Activated CD4-positive, alpha-beta T cell treated with anti-CD3 and anti-CD28 coated beads, Interleukin-2, amount 10 ng/mL, durations not matched to agents 24 days and 14 days (primary cell): ENCODE measurements at regions of chr1 and their contacts with region 1.

Region 1: DNA sequence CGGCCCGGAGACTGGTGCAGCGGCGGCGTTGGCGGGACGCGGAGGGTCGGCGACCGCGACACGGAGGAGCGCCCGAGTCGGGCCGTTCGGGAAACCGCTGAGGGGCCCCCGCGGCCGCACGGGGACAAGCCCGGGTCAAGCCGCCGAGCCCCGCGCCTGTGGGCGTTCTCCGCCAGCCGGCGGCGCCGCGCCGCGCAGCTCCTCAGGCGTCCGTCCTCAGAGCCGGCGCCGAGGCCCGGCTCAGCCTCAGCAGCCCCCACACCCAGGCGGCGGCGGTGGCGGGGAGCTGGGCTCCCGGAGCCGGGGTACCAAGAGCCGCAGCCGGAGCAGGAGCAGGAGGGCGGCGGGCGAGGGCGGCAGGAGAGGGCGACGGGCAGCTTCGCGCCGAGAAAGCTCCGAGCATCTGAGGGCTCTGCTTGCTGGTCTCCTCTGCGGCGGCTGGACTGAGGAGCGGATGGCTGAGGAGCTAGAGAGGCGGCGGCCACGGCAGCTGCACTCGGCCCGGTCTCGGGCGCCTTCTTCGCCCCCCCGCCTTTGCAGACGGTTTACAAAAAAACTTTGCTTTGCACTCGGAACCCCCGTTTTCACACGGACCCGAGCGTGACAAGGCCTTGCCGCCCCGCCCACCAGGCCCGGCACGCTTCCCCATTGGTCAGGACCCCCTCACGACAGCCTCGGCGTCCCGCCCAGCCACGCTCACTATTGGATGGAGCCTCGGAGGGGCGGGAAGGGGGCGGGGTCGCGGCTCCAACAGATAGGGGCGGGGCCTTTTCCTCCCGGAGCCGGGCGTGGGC is at the start of gene SLC30A1:
- DNase-seq: peak; percentile 100
- H3K4me3 Mint-ChIP-seq: peak within 1 kb of the TSS; percentile 92
- H3K27ac Mint-ChIP-seq: peak within 1 kb of the TSS; percentile 87
- H3K4me1 Mint-ChIP-seq: peaks cover 33% of the 10 kb centered on the region
- H3K27me3 Mint-ChIP-seq: peaks cover 4% of the 10 kb centered on the region
- total RNA-seq, gene SLC30A1: 8.5 and 9.0 TPM in 2 replicates

Region 2: GRCh38 chr1:211382714-211383480 is 195.9 kb before region 1 on chr1:
- intact Hi-C with region 1: loop called (anchors 5 kb)
- DNase-seq: peak; percentile 95
- H3K4me3 Mint-ChIP-seq: peak overlapping the region; percentile 80
- H3K27ac Mint-ChIP-seq: peak overlapping the region; percentile 93
- H3K4me1 Mint-ChIP-seq: peaks cover 43% of the 10 kb centered on the region
- H3K27me3 Mint-ChIP-seq: peaks cover 6% of the 10 kb centered on the region

Region 3: GRCh38 chr1:211606914-211607755 is 28.3 kb after region 1 on chr1:
- intact Hi-C with region 1: loop called (anchors 2 kb)
- DNase-seq: peak; percentile 75
- H3K4me3 Mint-ChIP-seq: peak overlapping the region; percentile 77
- H3K27ac Mint-ChIP-seq: peak overlapping the region; percentile 88
- H3K4me1 Mint-ChIP-seq: peaks cover 20% of the 10 kb centered on the region
- H3K27me3 Mint-ChIP-seq: no peaks in the 10 kb centered on the region

Region 4: DNA sequence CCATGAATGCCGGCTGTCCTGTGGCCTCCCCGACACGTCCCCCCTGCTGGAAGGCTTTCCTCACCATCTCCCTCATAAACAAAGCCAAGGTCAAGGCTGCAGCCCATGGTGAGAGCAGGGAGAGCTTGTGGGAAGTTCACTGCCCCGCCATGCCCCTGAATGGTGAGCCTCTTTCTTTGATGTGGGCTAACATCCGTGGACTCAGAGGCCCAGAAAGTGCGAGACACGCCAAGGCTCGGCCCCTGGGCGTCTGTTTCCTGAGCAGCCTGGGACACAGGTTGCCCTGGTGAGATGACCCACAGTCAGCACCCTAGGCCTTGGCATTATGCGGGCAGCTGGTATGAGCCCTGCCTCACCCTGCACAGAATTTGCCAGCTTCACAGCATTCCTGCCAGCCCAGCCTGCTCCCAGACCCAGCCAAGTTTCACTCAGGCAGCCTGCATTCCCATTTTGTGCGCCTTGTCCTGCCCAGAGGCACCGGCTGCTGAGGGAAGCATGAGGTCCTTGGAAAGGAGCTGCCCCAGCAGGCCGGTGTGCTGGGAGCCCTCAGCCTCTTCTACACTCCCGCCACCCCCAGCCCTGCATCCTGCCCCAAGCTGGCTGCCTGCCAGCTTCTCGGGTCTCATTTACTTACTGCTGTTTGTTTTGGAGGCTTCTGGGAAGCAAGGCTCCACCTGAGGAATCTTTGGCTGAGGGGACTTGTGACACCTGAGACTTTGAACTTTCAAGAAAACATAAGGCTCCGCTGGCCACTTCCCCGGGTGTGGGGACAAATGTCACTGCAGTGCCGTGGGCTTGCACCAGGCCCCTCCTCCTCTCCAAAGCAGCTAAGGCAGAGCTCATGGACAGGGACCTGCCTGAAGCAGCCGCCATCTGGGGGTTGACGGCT is 64.7 kb after region 1 on chr1:
- intact Hi-C with region 1: no loop called
- DNase-seq: no peak
- H3K4me3 Mint-ChIP-seq: no peak overlapping the region
- H3K27ac Mint-ChIP-seq: no peak overlapping the region
- H3K4me1 Mint-ChIP-seq: peaks cover 4% of the 10 kb centered on the region
- H3K27me3 Mint-ChIP-seq: peaks cover 14% of the 10 kb centered on the region

Region 5: DNA sequence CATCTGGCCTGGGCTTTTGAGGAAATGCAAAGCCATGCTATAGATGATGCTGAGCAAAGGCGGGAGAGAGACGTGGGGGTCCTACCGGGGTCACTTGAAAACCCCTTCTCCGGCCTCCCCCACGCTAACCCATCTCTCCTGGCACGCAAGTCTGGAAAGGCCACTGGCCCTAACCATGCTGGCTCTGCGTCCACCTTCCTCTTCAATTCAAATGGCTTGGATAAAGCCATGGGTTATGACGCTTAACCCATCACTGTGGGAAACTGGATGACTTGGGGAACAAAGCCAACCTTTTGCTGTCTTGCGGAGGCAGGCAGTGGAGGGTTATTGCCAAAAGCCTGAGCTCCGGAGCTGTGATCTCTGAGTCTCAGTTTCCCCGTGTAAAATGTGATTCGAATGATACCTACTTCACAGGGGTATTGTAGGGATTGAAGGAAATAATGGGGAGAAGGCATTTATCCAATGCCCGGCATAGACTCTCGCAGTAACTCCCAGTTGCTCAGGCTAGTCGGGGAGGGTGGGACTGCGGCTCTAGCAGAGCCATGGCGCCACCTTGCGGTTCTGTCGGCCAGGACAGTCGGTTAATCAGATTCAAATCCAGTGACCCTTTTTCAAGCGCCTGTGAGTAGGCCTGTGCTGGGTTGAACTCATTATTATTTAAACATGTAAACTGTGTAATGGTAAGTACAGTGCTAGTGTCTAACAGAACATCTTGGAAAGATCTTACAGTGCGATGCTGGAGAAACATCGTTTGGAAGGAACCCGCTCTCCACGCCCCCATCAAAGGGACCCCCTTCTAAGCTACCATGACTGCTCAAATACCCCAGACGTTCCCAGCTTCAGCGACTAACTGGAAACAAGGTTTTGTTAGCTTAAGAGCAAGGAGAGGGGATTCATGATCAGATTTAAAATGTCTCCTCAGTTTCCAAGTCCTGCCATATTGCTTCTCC is 76.3 kb after region 1 on chr1:
- intact Hi-C with region 1: loop called (anchors 1 kb)
- DNase-seq: peak; percentile 94
- H3K4me3 Mint-ChIP-seq: no peak overlapping the region
- H3K27ac Mint-ChIP-seq: no peak overlapping the region
- H3K4me1 Mint-ChIP-seq: peaks cover 6% of the 10 kb centered on the region
- H3K27me3 Mint-ChIP-seq: peaks cover 10% of the 10 kb centered on the region

Region 6: DNA sequence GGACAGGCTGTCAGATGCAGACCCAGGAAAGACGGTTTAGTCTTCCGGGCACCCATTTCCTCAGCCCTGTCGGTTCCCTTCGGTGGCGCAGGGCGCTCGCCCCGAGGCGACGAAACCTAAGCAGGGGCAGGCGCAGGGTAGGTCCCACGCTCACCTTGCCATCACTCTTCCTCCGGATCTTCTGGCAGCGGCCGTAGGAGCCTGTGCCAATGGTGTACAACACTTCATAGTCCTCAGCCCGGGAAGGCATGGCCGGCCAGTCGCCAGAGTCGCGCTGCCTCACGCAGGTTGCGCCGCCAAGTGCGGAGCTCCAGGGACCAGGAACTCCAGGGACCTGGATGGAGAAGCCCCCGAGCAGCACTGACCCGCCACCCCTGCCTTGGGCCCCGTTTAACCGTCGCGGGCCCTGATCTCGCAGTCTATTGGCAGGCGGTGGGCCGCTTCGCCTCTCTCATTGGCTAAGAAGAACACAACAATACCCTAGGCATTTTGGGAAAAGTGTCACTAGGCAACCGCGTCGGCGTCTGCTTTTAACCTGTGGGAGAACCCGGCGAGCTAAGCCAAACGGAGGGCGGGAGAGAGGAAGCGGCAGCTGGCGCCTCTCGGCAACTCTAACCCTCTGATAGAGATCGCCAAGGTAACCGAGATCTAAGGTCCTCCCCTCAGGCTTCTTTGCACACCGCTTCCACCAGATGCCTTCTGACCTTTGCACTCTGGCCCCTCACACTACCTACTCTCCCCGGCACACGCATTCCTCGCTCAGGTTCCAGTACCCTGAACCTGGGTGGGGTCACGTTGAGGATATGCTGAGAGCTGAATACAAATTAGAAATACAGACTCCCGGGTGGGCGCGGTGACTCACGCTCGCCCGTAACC is 96.6 kb after region 1 on chr1 and contains the start of gene NEK2:
- intact Hi-C with region 1: loop called (anchors 2 kb)
- DNase-seq: peak; percentile 97
- H3K4me3 Mint-ChIP-seq: peak within 1 kb of the TSS; percentile 97
- H3K27ac Mint-ChIP-seq: peak within 1 kb of the TSS; percentile 85
- H3K4me1 Mint-ChIP-seq: peaks cover 28% of the 10 kb centered on the region
- H3K27me3 Mint-ChIP-seq: peaks cover 7% of the 10 kb centered on the region
- total RNA-seq, gene NEK2: 18.0 and 18.2 TPM in 2 replicates

Region 7: DNA sequence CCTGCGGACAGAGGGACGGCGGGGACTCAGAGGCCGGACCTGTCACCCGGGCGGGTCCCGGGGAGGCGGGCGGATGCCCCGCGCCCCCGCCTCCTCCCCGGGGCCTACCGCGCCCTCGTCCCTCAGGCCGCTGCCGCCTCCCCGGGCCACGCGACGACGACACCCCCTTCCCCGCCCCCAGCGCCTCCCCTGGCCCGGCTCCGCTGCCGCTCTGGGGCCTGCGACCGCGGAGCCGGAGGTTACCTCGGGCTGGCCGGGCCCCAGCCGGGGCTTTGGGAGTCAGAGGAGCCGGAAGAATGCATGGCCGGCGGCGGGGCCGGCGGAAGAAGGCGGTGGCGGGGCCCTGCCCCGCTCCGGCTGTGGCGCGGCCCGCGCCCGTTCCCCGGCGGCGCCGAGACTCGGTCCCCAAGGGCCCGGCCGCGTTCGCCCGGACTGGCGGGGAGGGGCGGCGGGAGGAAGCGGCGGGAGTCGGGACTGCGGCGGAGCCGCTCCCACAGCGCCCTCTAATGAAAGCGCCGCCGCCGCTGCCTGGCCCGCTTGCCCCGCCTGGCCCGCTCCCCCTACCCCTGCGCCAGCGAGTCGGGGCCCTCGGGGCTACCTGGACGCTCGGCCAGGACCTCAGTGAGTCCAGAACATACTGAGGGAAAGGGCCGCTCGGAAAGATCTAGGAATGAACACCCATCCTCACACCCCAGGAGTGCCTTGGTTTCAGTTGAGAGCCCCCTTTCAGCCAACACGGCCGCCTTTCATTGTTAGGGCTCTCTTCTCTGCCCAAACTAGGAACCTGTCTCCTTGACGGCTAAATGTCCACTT is 251.7 kb after region 1 on chr1 and contains the start of gene LPGAT1:
- intact Hi-C with region 1: loop called (anchors 5 kb)
- DNase-seq: peak; percentile 91
- H3K4me3 Mint-ChIP-seq: peak within 1 kb of the TSS; percentile 91
- H3K27ac Mint-ChIP-seq: peak within 1 kb of the TSS; percentile 88
- H3K4me1 Mint-ChIP-seq: peaks cover 62% of the 10 kb centered on the region
- H3K27me3 Mint-ChIP-seq: no peaks in the 10 kb centered on the region
- total RNA-seq, gene LPGAT1: 35.6 and 42.1 TPM in 2 replicates